Activated CD4-positive, alpha-beta T cell treated with anti-CD3 and anti-CD28 coated beads, Interleukin-2, amount 10 ng/mL, durations not matched to agents 24 days and 14 days (primary cell): ENCODE measurements at regions of chr1 and their contacts with region 1.

Region 1: GRCh38 chr1:20507564-20508410 is at the start of gene MUL1:
- DNase-seq: peak; percentile 99
- H3K4me3 Mint-ChIP-seq: peak within 1 kb of the TSS; percentile 87
- H3K27ac Mint-ChIP-seq: peak within 1 kb of the TSS; percentile 88
- H3K4me1 Mint-ChIP-seq: peaks cover 5% of the 10 kb centered on the region
- H3K27me3 Mint-ChIP-seq: peaks cover 3% of the 10 kb centered on the region
- total RNA-seq, gene MUL1: 19.1 and 19.4 TPM in 2 replicates

Region 2: GRCh38 chr1:20080441-20081352 is 427.1 kb before region 1 on chr1:
- intact Hi-C with region 1: no loop called
- DNase-seq: peak; percentile 61
- H3K4me3 Mint-ChIP-seq: no peak overlapping the region
- H3K27ac Mint-ChIP-seq: no peak overlapping the region
- H3K4me1 Mint-ChIP-seq: peaks cover 7% of the 10 kb centered on the region
- H3K27me3 Mint-ChIP-seq: peaks cover 36% of the 10 kb centered on the region

Region 3: GRCh38 chr1:20430355-20431175 is 77.2 kb before region 1 on chr1:
- intact Hi-C with region 1: no loop called
- DNase-seq: peak; percentile 80
- H3K4me3 Mint-ChIP-seq: no peak overlapping the region
- H3K27ac Mint-ChIP-seq: no peak overlapping the region
- H3K4me1 Mint-ChIP-seq: peaks cover 4% of the 10 kb centered on the region
- H3K27me3 Mint-ChIP-seq: peaks cover 28% of the 10 kb centered on the region

Region 4: GRCh38 chr1:20493839-20494608 is 13.8 kb before region 1 on chr1:
- intact Hi-C with region 1: no loop called
- DNase-seq: peak; percentile 95
- H3K4me3 Mint-ChIP-seq: no peak overlapping the region
- H3K27ac Mint-ChIP-seq: no peak overlapping the region
- H3K4me1 Mint-ChIP-seq: peaks cover 8% of the 10 kb centered on the region
- H3K27me3 Mint-ChIP-seq: peaks cover 25% of the 10 kb centered on the region

Region 5: GRCh38 chr1:20521960-20522861 is 14.4 kb after region 1 on chr1:
- intact Hi-C with region 1: no loop called
- DNase-seq: peak; percentile 91
- H3K4me3 Mint-ChIP-seq: no peak overlapping the region
- H3K27ac Mint-ChIP-seq: no peak overlapping the region
- H3K4me1 Mint-ChIP-seq: peaks cover 3% of the 10 kb centered on the region
- H3K27me3 Mint-ChIP-seq: peaks cover 11% of the 10 kb centered on the region

Region 6: DNA sequence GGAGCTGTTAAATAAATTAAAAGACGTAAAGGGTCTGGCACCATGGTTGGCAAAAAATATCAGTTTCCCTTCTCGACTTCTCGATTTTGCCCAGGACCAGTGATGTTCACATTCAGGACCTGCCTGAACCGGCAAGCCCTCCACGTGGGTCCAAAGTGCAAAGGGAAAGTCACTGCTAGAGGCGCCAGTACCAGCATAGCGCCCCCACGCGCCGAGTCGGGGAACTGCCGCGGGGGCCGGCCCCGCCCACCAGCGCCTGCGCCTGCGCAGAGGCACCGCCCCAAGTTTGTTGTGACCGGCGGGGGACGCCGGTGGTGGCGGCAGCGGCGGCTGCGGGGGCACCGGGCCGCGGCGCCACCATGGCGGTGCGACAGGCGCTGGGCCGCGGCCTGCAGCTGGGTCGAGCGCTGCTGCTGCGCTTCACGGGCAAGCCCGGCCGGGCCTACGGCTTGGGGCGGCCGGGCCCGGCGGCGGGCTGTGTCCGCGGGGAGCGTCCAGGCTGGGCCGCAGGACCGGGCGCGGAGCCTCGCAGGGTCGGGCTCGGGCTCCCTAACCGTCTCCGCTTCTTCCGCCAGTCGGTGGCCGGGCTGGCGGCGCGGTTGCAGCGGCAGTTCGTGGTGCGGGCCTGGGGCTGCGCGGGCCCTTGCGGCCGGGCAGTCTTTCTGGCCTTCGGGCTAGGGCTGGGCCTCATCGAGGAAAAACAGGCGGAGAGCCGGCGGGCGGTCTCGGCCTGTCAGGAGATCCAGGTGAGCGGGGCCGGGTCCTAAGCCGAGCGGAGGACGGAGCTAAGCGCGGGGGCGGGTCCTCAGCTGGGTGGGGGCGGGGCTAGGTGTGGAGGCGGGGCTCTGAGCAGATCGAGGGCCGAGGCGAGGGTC is 125.6 kb after region 1 on chr1 and contains the start of gene PINK1:
- intact Hi-C with region 1: loop called (anchors 5 kb)
- DNase-seq: peak; percentile 98
- H3K4me3 Mint-ChIP-seq: peak within 1 kb of the TSS; percentile 85
- H3K27ac Mint-ChIP-seq: peak within 1 kb of the TSS; percentile 60
- H3K4me1 Mint-ChIP-seq: peaks cover 7% of the 10 kb centered on the region
- H3K27me3 Mint-ChIP-seq: peaks cover 10% of the 10 kb centered on the region
- total RNA-seq, gene PINK1: 2.0 and 2.4 TPM in 2 replicates